Uterus (tissue), 4 donors: ENCODE measurements at regions of chr3 and their contacts with region 1.

Region 1: GRCh38 chr3:33636125-33636850 is 81.8 kb downstream of the CLASP2 start:
- DNase-seq: no peak
- H3K4me3 ChIP-seq: no peak overlapping the region
- H3K27ac ChIP-seq: no peak overlapping the region
- H3K4me1 ChIP-seq: no peaks in the 10 kb centered on the region
- H3K27me3 ChIP-seq: no peaks in the 10 kb centered on the region
- CTCF ChIP-seq: peak; percentile 28 to 64 (median 55)
- POLR2A ChIP-seq: no peak

Region 2: GRCh38 chr3:33186524-33187367 is 449.5 kb before region 1 on chr3:
- intact Hi-C with region 1: no loop called
- DNase-seq: no peak
- H3K4me3 ChIP-seq: no peak overlapping the region
- H3K27ac ChIP-seq: no peak overlapping the region
- H3K4me1 ChIP-seq: no peaks in the 10 kb centered on the region
- H3K27me3 ChIP-seq: no peaks in the 10 kb centered on the region
- CTCF ChIP-seq: no peak
- POLR2A ChIP-seq: no peak

Region 3: GRCh38 chr3:33749546-33750210 is 113.4 kb after region 1 on chr3:
- intact Hi-C with region 1: no loop called
- DNase-seq: no peak
- H3K4me3 ChIP-seq: no peak overlapping the region
- H3K27ac ChIP-seq: no peak overlapping the region
- H3K4me1 ChIP-seq: no peaks in the 10 kb centered on the region
- H3K27me3 ChIP-seq: no peaks in the 10 kb centered on the region
- CTCF ChIP-seq: no peak
- POLR2A ChIP-seq: no peak

Region 4: GRCh38 chr3:33787328-33788009 is 151.2 kb after region 1 on chr3:
- intact Hi-C with region 1: loop called (anchors 10 kb)
- DNase-seq: peak; percentile 48 to 55
- H3K4me3 ChIP-seq: no peak overlapping the region
- H3K27ac ChIP-seq: no peak overlapping the region
- H3K4me1 ChIP-seq: no peaks in the 10 kb centered on the region
- H3K27me3 ChIP-seq: no peaks in the 10 kb centered on the region
- CTCF ChIP-seq: peak; percentile 64 to 83 (median 76)
- POLR2A ChIP-seq: no peak